Posterior vena cava (tissue), 2 donors: ENCODE measurements at regions of chr11 and their contacts with region 1.

Region 1: DNA sequence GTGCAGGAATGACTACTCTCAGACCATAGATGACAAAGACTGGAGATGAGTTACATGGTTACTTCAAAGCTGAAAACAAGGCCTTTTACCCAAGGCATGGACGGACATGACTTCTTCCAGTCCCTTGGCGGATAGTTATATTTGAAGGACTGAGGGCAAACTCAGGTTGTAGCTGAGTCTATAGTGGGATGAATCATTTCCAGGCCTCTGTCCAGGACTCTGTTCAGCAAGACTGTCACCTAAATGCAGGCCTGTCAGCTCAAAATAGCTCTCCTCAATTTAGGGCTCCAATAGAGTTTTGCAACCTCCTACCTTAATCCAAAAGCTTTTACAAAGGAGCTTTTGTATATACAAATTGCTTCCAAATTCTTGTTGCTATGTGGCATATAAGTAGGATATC is 24.3 kb upstream of the OR52J3 start:
- DNase-seq: no peak

Region 2: DNA sequence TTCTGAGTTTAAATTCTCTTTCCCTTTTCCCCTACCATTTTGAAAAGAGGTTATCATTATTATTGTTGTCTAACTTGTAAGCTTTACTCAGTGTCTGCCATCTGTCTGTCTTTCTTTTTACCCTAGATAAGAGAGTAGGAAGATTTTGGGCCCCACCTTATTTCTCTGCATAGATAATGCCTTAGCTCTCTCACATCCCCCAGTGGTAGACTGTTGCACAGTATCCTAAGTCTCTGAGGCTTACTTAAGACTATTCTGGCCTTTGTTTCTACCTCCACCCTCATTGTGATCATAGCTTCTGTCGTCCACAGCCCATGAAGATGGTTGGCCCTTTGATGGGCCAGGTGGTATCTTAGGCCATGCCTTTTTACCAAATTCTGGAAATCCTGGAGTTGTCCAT is 30.9 kb before region 1 on chr11:
- intact Hi-C with region 1: loop called in 1 of 2 experiments (anchors 1 kb)
- DNase-seq: no peak

Region 3: GRCh38 chr11:5065027-5065426 is 43.0 kb after region 1 on chr11:
- intact Hi-C with region 1: no loop called
- DNase-seq: no peak

Region 4: GRCh38 chr11:5092821-5093585 is 71.0 kb after region 1 on chr11:
- intact Hi-C with region 1: no loop called
- DNase-seq: no peak